OCI-LY7 (cell line): ENCODE measurements at regions of chr18 and their contacts with region 1.

Region 1: DNA sequence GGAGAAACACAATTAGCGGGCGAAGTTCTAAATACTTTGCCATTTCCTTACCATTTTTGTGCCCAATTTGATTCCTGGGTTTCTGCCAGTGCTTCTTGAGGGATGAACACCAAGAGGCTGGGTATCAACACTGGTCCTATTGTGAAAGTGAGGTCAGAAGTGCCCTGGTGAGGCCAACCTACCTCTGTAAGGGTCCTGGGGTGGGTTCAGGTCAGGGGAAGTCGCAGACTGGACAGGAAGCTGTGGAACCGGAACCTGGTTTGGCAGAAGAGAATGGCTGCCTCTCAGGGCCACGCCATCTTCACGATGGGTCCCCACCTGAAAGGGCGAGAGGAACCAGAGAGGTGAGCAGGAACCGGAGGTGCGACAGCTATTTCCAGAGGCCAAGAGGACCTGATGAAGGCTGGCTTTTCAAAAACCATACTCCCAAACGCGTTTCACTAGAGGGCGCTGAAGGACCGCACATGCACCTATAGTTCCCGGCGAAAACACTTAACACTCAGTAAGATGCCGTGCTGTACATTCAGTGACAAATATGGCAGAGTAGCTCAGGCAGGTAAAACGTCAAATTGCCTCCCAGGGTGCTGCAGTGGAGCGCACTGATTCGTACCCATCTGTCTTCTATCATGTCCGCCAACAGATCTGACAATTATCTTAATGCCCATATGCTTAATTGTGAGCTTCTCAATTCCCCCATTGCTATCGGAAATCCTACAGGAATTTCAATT is 275.3 kb upstream of the CCDC68 start:
- DNase-seq: peak; percentile 61
- H3K4me3 ChIP-seq: no peak overlapping the region
- H3K27ac ChIP-seq: no peak overlapping the region
- H3K4me1 ChIP-seq: no peaks in the 10 kb centered on the region
- CTCF ChIP-seq: peak; percentile 77

Region 2: DNA sequence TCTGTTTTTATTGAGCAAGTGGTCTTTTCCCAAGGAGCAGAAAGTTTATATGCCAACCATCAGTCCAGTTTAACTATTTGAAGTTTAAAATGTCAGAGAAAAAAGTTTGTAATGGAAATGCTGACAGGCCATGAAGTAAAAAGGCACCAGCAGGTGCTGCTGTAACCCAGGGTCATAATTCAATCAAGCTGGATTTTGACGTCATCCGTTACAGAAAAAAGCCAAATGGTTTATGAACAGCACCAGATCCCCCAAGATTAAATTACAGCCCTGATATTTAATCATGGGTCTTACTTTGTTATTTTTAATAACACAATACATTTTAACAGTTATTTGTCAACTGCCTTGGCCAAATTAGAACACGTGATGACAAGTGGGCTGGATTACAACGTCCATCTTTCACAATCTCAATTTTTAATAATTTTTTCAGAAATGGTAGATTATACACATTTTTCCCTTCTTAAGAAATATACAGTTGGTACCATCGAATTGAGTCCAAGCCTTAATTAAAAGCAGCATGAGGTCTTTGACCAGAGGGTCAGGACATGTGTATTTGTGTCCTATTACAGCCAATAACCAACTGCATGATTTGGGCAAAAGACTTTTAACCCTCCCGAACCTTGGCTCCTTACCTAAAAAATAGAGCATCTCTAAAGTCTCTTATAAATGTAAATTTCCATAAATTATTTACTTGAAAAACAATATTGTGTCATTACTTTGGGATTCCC is 343.4 kb after region 1 on chr18:
- CTCF ChIA-PET with region 1: no interaction called
- POLR2A ChIA-PET with region 1: no interaction called
- intact Hi-C with region 1: loop called (anchors 10 kb)
- DNase-seq: no peak
- H3K4me3 ChIP-seq: no peak overlapping the region
- H3K27ac ChIP-seq: no peak overlapping the region
- H3K4me1 ChIP-seq: peaks cover 18% of the 10 kb centered on the region
- CTCF ChIP-seq: no peak; the same call in 1 of the 2 replicates

Region 3: GRCh38 chr18:56575819-56576663 is 1341.5 kb after region 1 on chr18:
- CTCF ChIA-PET with region 1: no interaction called
- POLR2A ChIA-PET with region 1: no interaction called
- intact Hi-C with region 1: loop called (anchors 10 kb)
- DNase-seq: peak; percentile 33
- H3K4me3 ChIP-seq: no peak overlapping the region
- H3K27ac ChIP-seq: no peak overlapping the region
- H3K4me1 ChIP-seq: no peaks in the 10 kb centered on the region
- CTCF ChIP-seq: peak; percentile 74